ENCODE measurements at regions of chr3 and their contacts with region 1.

Region 1: DNA sequence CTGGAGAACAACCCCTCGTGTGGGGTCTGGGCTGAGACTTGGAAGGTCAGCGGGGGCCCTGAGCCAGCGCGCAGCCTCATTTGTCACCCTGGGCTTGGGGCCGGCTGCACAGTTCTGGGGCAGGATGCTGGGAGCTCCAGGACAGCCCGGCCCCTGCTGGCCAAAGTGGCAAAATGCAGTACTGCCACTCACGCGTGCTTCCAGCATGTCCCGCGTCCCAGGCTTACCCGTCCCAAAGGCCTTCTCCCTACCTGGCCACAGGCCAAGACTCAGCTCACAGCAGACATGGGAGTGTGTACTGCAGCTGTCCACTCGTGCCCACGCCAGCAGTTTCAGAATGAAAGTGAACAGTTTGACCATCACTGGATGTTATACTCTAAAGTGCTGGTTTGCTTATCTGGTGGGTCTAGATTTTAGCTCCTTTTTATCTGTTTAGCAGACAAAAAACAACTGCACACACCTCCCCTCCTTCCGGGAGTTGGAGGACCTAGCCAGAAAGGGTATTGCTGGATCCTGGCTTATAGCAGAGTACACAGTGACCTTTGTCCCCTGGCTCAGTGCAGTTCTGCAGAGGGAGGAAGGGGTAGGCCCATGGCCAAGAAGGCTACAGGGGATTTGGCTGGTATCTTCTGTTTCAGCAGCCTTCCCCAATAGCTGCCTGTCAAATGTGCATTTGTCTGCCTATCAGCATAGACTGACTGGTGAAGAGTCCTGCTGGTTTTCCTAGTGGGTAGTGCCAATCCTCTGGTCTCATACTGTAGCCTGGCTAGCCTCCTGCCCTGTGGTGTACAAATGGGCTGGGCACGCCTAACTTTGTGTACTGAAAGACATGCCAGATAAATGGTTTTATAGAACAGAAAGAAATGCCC is 23.2 kb upstream of the IP6K2 start:
- DNase-seq: peak; percentile 92

Region 2: DNA sequence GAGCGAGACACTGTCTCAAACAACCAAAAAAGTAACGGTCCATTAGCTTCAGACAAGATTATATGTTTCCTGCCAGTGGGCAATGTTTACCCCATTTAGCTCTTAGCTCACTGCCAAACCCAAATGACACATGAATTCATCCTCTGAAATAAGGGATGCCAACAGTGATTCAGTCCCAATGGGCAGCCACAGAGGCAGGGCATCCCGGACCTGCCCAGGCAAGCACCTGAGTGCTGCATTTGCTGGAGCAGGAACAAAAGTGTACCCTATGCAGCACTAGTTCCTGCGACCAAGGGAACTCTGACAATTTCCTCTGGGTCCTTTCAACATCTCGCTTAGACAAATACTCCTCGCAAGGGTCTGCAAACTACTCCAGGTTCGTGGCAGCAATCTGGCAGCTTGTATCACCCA is 31.1 kb before region 1 on chr3:
- CTCF ChIA-PET with region 1: no interaction called
- POLR2A ChIA-PET with region 1: no interaction called
- DNase-seq: no peak

Region 3: GRCh38 chr3:48750856-48751255 is 10.7 kb after region 1 on chr3:
- CTCF ChIA-PET with region 1: interaction called, 14 read pairs
- POLR2A ChIA-PET with region 1: interaction called, 5 read pairs
- DNase-seq: no peak

Region 4: DNA sequence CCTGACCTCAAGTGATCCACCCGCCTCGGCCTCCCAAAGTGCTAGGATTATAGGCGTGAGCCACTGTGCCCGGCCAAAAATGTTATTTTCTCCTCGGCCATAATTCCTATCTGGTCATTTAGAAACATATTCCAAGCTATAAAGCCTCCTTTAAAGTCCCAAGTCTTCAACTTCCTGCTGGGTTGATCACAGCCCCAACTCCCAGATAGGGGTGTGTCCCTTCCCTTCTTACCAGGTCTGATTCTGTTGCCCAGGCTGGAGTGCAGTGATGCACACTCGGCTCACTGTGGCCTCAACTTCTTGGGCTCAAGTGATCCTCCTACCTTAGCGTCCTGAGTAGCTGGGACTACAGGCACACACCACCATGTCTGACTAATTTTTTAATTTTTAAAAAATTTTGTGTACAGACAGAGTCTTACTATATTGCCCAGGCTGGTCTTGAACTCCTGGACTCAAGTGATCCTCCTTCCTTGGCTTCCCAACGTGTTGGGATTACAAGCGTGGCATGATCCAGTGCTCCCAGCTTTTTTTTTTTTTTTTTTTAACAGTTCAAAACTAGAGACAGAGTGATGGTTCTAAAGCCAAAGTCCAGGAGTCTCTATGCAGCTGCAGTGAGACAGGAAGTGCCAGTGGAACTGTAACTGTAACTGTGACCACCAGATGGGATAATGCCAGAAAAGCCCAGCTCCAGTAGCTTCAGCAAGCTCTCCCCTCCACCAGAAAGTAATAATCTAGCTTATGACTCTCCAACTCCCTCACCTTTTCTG is 115.7 kb after region 1 on chr3:
- CTCF ChIA-PET with region 1: no interaction called
- POLR2A ChIA-PET with region 1: no interaction called
- DNase-seq: no peak